CD4-positive, alpha-beta T cell (primary cell): ENCODE measurements at regions of chr18 and their contacts with region 1.

Region 1: DNA sequence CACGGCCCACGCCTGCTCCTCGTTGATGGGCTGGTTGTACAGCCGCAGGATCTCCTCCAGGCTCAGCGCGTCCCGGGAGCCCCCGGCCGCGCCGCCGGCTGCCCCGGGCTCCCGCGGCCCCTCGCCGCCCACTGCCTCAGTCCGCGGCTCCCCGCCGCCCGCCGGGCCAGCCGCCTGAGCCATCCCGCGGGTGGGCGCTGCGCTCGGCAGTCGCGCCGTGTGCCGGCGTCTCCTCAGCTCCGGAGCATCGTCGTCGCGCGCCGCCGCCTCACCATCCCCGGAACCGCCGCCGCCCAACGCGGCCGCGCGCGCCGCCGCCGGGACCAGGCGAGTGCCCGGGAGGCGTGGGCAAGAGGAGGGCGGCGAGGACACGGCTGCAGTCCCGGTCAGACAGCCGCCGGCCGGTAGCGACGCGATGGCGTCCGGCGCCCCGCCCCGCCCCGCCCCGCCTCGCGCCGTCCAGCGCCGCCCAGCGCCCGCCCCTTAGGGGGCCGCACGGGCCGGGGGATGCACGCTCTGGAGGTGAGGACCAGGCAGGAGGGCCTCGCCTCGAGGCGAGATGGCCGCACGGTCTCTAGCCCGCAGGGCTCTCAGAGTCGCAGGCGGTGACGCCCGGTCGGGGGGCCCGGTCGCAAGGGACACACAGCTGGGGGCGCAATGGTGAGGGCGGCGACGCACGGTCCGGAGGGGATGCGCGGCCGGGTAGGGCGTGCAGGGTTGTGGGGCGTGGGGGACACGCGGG is at the start of gene SPIRE1:
- DNase-seq: peak in 11 of 14 experiments; percentile 6 to 75 (median 35)
- ATAC-seq: peak; percentile 61
- H3K4me3 ChIP-seq: peak within 1 kb of the TSS; percentile 45
- H3K4me3 Mint-ChIP-seq: peak within 1 kb of the TSS; percentile 93
- H3K27ac ChIP-seq: no peak within 1 kb of the TSS
- H3K27ac Mint-ChIP-seq: peak within 1 kb of the TSS; percentile 34
- H3K4me1 ChIP-seq: peaks cover 10% of the 10 kb centered on the region
- H3K4me1 Mint-ChIP-seq: peaks cover 12% of the 10 kb centered on the region
- H3K27me3 ChIP-seq: no peaks in the 10 kb centered on the region
- H3K27me3 Mint-ChIP-seq: peaks cover 18% of the 10 kb centered on the region
- CTCF ChIP-seq: no peak
- total RNA-seq, gene SPIRE1: 0.99 to 1.4 TPM

Region 2: GRCh38 chr18:12327510-12328178 is 330.2 kb before region 1 on chr18:
- CTCF ChIA-PET with region 1: interaction called, 3 read pairs
- POLR2A ChIA-PET with region 1: no interaction called
- intact Hi-C with region 1: loop called (anchors 1 to 2 kb)
- DNase-seq: peak; percentile 56 to 78 (median 64)
- ATAC-seq: peak; percentile 56
- H3K4me3 ChIP-seq: no peak overlapping the region
- H3K4me3 Mint-ChIP-seq: no peak overlapping the region
- H3K27ac ChIP-seq: no peak overlapping the region
- H3K27ac Mint-ChIP-seq: no peak overlapping the region
- H3K4me1 ChIP-seq: peaks cover 4% of the 10 kb centered on the region
- H3K4me1 Mint-ChIP-seq: no peaks in the 10 kb centered on the region
- H3K27me3 ChIP-seq: no peaks in the 10 kb centered on the region
- H3K27me3 Mint-ChIP-seq: no peaks in the 10 kb centered on the region
- CTCF ChIP-seq: peak; percentile 68

Region 3: DNA sequence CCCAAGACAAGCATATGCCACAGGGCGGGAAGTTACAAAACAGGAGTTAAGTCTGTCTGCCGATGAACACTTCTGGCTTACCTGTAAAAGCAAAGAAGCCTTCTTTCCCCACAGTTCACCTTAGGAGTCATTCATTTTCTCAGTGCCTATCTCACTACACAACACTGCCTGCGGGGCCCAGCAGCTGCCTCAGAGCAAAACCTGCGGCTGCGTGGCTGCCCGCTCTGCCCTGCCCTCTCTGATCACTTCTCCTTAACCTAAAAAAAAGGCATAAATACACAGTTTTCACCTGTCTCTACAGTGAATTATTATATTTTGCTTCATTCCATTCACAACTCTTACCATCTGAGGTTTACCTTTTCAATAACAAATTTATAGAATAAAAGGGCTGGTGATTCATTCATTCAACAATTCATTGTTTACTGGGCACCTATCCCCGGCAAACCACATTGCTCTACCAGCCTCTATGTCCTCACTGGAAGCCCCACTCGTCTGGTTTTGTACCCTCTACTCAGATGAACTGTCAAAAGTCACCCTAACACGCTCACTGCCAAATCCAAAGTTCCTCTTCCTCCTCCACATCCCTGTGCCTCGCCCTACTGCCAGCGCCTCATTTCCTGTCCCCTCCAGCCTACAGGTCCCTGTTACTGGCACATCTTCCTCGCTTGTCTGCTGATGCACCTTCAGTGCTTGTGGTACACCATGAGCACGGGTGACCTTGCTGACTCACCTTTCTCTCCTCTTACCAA is 312.2 kb before region 1 on chr18:
- CTCF ChIA-PET with region 1: no interaction called
- POLR2A ChIA-PET with region 1: no interaction called
- intact Hi-C with region 1: no loop called
- DNase-seq: no peak
- ATAC-seq: no peak
- H3K4me3 ChIP-seq: no peak overlapping the region
- H3K4me3 Mint-ChIP-seq: no peak overlapping the region
- H3K27ac ChIP-seq: no peak overlapping the region
- H3K27ac Mint-ChIP-seq: no peak overlapping the region
- H3K4me1 ChIP-seq: no peaks in the 10 kb centered on the region
- H3K4me1 Mint-ChIP-seq: no peaks in the 10 kb centered on the region
- H3K27me3 ChIP-seq: no peaks in the 10 kb centered on the region
- H3K27me3 Mint-ChIP-seq: no peaks in the 10 kb centered on the region
- CTCF ChIP-seq: no peak

Region 4: GRCh38 chr18:12391618-12392165 is 266.2 kb before region 1 on chr18:
- CTCF ChIA-PET with region 1: no interaction called
- POLR2A ChIA-PET with region 1: interaction called, 3 read pairs
- intact Hi-C with region 1: loop called in 1 of 2 experiments (anchors 1 kb)
- DNase-seq: peak; percentile 22 to 75 (median 35)
- ATAC-seq: peak; percentile 99
- H3K4me3 ChIP-seq: no peak overlapping the region
- H3K4me3 Mint-ChIP-seq: no peak overlapping the region
- H3K27ac ChIP-seq: no peak overlapping the region
- H3K27ac Mint-ChIP-seq: no peak overlapping the region
- H3K4me1 ChIP-seq: no peaks in the 10 kb centered on the region
- H3K4me1 Mint-ChIP-seq: no peaks in the 10 kb centered on the region
- H3K27me3 ChIP-seq: peaks cover 0 to 3% of the 10 kb centered on the region in 2 experiments
- H3K27me3 Mint-ChIP-seq: peaks cover 12% of the 10 kb centered on the region
- CTCF ChIP-seq: peak; percentile 82

Region 5: GRCh38 chr18:12597775-12598174 is 60.1 kb before region 1 on chr18:
- CTCF ChIA-PET with region 1: no interaction called
- POLR2A ChIA-PET with region 1: no interaction called
- intact Hi-C with region 1: no loop called
- DNase-seq: no peak
- ATAC-seq: no peak
- H3K4me3 ChIP-seq: no peak overlapping the region
- H3K4me3 Mint-ChIP-seq: no peak overlapping the region
- H3K27ac ChIP-seq: no peak overlapping the region
- H3K27ac Mint-ChIP-seq: no peak overlapping the region
- H3K4me1 ChIP-seq: peaks cover 7% of the 10 kb centered on the region
- H3K4me1 Mint-ChIP-seq: peaks cover 41% of the 10 kb centered on the region
- H3K27me3 ChIP-seq: no peaks in the 10 kb centered on the region
- H3K27me3 Mint-ChIP-seq: no peaks in the 10 kb centered on the region
- CTCF ChIP-seq: no peak

Region 6: DNA sequence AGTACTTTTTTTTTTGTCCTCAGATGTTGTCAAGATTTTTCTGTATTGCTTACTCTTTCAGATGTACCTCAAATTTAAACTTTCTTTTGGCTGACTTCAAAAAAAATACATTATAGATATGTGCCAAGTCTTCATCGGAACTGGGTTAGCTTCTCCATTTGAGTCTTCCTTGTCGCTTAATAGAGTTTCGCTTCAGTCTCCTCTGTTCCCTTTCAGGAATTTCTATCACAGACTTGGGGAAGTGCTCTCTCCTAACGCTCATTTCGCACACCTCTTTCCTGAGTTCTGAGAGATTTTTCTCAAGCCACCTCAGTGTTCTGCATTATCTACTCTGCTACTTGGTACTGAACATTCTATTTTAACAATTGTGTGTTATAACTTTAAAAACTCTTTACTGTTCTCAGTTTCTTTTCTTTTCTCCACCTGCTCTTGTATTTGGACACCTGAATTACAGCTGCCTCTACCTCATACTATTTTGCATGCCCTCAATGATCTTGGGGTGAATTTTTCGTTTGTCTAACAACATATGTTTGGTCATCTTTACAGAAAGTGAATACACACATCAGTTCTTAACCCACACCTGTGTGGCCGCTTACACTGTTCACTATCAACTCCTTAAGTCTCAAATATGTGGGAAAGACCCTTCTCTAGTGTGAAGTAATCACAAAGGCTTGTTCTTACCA is 209.7 kb after region 1 on chr18:
- CTCF ChIA-PET with region 1: no interaction called
- POLR2A ChIA-PET with region 1: no interaction called
- intact Hi-C with region 1: no loop called
- DNase-seq: no peak
- ATAC-seq: no peak
- H3K4me3 ChIP-seq: no peak overlapping the region
- H3K4me3 Mint-ChIP-seq: no peak overlapping the region
- H3K27ac ChIP-seq: no peak overlapping the region
- H3K27ac Mint-ChIP-seq: no peak overlapping the region
- H3K4me1 ChIP-seq: peaks cover 14% of the 10 kb centered on the region
- H3K4me1 Mint-ChIP-seq: peaks cover 45% of the 10 kb centered on the region
- H3K27me3 ChIP-seq: no peaks in the 10 kb centered on the region
- H3K27me3 Mint-ChIP-seq: no peaks in the 10 kb centered on the region
- CTCF ChIP-seq: no peak